ENCODE measurements at regions of chr1 and their contacts with region 1.

Region 1: DNA sequence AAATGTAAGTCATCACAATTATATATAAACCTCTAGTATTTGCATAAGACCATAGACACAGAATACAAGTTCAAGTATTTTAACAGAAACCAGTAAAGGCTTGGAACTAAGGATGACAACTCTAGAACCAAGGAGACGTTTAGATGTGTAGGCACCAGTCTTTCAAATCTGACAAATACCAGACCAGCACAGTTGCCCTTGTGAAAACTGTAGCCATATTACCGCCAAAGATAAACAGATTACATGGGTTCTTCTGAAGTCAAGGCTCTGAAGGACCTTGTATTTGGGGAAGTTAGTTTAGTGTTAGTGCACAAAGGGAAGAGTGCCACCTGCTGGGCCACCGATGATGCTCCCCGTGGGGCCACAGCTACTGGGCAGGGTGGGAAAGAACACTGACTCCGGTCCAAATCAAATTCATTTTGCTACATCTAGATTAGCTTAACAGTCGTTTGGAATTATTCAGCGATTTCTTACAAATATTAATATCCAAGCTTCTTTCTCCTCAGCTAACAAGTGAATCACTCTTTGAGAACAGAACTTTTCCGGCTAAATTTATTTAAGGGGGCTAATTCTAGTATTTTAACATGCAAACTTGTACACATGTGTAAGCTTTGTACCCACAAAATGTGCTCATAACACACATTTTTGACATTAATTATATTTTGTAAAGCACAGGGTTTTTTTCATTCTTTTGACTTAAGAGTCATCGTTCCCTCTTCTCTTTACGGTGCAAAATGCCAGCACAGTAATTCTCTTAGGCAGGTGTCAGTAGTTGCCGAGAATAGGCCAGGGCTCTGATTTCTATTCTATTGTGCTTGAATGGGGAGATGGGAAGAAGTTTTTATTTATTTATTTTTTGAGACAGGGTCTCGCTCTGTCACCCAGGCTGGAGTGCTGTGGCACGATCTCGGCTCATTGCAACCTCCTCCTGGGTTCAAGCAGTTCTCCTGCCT is 8.0 kb upstream of the NIBAN1 start:
- DNase-seq: peak; percentile 85
- H3K4me3 Mint-ChIP-seq: no peak overlapping the region
- H3K27ac Mint-ChIP-seq: no peak overlapping the region
- H3K4me1 Mint-ChIP-seq: no peaks in the 10 kb centered on the region
- H3K27me3 Mint-ChIP-seq: peaks cover 4% of the 10 kb centered on the region

Region 2: GRCh38 chr1:184810735-184811343 is 171.4 kb before region 1 on chr1:
- CTCF ChIA-PET with region 1: interaction called, 362 read pairs
- POLR2A ChIA-PET with region 1: interaction called, 4 read pairs
- intact Hi-C with region 1: no loop called
- DNase-seq: no peak
- H3K4me3 Mint-ChIP-seq: no peak overlapping the region
- H3K27ac Mint-ChIP-seq: no peak overlapping the region
- H3K4me1 Mint-ChIP-seq: peaks cover under 1% of the 10 kb centered on the region
- H3K27me3 Mint-ChIP-seq: no peaks in the 10 kb centered on the region

Region 3: GRCh38 chr1:185062710-185063370 is 80.6 kb after region 1 on chr1:
- CTCF ChIA-PET with region 1: no interaction called
- POLR2A ChIA-PET with region 1: no interaction called
- intact Hi-C with region 1: no loop called
- DNase-seq: no peak
- H3K4me3 Mint-ChIP-seq: no peak overlapping the region
- H3K27ac Mint-ChIP-seq: peak overlapping the region; percentile 16
- H3K4me1 Mint-ChIP-seq: peaks cover 60% of the 10 kb centered on the region
- H3K27me3 Mint-ChIP-seq: no peaks in the 10 kb centered on the region

Region 4: GRCh38 chr1:185170291-185170848 is 188.1 kb after region 1 on chr1:
- CTCF ChIA-PET with region 1: interaction called, 4 read pairs
- POLR2A ChIA-PET with region 1: no interaction called
- intact Hi-C with region 1: loop called (anchors 5 kb)
- DNase-seq: peak; percentile 33
- H3K4me3 Mint-ChIP-seq: no peak overlapping the region
- H3K27ac Mint-ChIP-seq: no peak overlapping the region
- H3K4me1 Mint-ChIP-seq: peaks cover 5% of the 10 kb centered on the region
- H3K27me3 Mint-ChIP-seq: no peaks in the 10 kb centered on the region

Region 5: DNA sequence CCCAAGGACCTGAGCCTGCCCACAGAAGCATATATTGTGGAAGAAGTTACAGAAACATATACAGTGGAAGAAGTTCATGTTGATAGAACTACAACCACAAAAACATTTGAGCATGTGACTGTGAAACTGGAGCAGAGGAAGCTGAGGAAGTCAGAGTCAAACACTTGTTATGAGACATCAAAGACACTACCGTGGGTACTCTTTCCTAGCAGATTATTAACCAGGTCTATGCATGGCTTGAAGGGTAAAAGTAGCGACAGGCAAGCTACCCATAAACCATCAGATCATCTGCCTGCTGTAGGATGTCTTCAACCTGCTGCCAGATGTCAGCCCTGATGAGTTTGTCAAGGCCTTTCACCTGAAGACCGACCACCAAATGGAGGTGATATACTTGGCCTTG is 299.0 kb after region 1 on chr1:
- CTCF ChIA-PET with region 1: no interaction called
- POLR2A ChIA-PET with region 1: no interaction called
- intact Hi-C with region 1: no loop called
- DNase-seq: peak; percentile 20
- H3K4me3 Mint-ChIP-seq: peak overlapping the region; percentile 28
- H3K27ac Mint-ChIP-seq: peak overlapping the region; percentile 88
- H3K4me1 Mint-ChIP-seq: peaks cover 57% of the 10 kb centered on the region
- H3K27me3 Mint-ChIP-seq: no peaks in the 10 kb centered on the region

Measured in activated CD4-positive, alpha-beta memory T cell treated with anti-CD3 and anti-CD28 coated beads for 36 hours (primary cell).